Mammary epithelial cell (primary cell): ENCODE measurements at regions of chr12 and their contacts with region 1.

Region 1: GRCh38 chr12:32159925-32160324 is 53.3 kb downstream of the BICD1 start:
- DNase-seq: peak; percentile 2
- H3K4me3 ChIP-seq: no peak overlapping the region
- H3K27ac ChIP-seq: no peak overlapping the region
- H3K4me1 ChIP-seq: peaks cover 11% of the 10 kb centered on the region
- H3K27me3 ChIP-seq: no peaks in the 10 kb centered on the region
- CTCF ChIP-seq: no peak

Region 2: GRCh38 chr12:31813305-31813704 is 346.6 kb before region 1 on chr12:
- CTCF ChIA-PET with region 1: no interaction called
- dilution Hi-C with region 1: no loop called
- in situ Hi-C with region 1: no loop called
- intact Hi-C with region 1: no loop called
- DNase-seq: peak; percentile 1
- H3K4me3 ChIP-seq: no peak overlapping the region
- H3K27ac ChIP-seq: no peak overlapping the region
- H3K4me1 ChIP-seq: no peaks in the 10 kb centered on the region
- H3K27me3 ChIP-seq: no peaks in the 10 kb centered on the region
- CTCF ChIP-seq: peak in 1 of 2 donors; percentile 29

Region 3: DNA sequence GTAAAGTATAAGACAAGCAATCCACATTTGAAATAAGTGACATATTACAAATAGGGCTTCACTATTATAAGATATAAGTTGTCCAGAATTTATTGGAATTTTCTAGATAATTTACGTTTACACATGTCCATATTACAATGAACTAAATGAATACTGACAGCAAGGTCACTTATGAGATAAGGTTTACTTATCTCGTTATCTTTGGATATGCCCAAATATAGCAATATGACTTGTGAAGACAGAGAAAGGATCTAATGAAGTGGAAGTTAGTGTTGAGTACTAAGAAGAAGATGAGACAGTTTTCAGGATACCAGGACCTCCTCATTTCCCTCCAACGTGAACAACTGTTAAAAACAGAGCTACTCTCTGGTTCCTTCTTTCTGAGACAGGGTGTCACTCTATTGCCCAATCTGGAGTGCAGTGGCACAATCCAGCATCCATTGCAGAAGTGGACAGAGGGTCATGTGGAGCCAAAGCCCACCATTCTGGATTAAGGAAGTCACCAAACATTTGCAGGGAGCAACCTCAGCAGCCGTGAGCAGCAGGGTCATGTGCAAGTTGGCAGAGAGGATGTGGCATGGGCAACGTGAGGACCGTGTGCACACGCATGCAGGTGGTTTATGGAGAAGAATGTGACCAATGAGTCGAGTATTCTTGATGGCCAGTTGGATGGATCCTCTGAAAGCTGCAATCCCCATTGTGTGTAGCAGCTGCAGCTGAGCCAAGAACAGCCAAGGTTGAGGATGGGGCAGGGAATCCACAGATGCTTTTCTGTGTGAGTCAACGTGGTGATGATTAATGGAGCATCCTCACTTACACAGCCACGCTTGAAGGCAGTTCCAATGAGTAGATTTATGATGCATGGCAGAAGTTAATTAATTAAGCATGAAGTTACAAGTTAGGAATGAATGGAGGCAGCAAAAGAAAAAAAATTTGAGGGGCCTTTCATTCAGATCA is 57.7 kb after region 1 on chr12:
- CTCF ChIA-PET with region 1: no interaction called
- dilution Hi-C with region 1: no loop called
- in situ Hi-C with region 1: loop called in 1 of 2 experiments (anchors 10 kb)
- intact Hi-C with region 1: no loop called
- DNase-seq: peak; percentile 83
- H3K4me3 ChIP-seq: no peak overlapping the region
- H3K27ac ChIP-seq: no peak overlapping the region
- H3K4me1 ChIP-seq: peaks cover 13% of the 10 kb centered on the region
- H3K27me3 ChIP-seq: no peaks in the 10 kb centered on the region
- CTCF ChIP-seq: no peak